B cell (primary cell): ENCODE measurements at regions of chr19 and their contacts with region 1.

Region 1: DNA sequence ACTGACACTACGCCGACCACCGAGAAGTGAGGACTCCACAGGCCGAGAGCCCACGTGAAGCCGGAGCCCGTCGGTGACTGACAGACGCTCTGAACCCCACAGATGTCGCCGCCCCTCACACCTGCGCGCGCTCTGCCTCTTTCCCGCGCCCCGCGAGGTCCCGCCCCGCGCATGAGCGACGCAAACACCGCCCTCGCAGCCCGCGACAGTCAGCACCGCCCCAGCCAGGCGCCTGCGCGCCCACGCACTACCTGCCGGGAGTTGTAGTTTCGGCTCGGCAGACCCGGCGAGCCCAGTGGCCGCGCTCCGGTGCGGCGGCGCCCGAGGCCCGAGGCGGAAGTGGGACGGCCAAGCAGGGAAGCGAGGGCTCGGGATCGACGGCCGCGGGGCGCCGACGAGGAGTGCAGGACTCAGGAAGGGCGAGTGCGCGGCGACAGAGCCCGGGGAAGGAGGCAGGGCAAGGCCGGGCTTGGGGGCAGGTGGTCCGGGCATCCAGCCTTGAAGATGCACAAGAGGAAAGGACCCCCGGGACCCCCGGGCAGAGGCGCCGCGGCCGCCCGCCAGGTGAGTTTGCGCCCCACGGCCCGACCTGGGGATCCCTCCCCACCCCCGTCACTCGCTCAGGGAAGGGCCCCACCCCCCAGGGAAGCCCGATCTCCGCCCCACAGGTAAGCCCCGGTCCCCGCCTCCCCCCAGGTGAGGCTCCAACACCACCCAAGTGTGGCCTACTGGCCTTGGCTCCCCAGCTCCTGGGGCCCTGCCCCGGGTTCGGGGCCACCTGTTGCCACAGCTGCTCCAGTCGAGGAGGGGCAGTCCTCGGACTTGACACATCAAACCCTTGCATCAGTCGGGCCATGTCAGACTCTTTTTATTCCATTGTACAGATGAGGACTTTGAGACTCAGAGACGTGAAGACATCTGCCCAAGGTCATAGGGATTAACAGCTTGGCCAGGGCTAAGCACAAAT is at the starts of genes BRME1 and CC2D1A:
- DNase-seq: peak; percentile 95
- ATAC-seq: peak; percentile 98
- H3K4me3 ChIP-seq: peak within 1 kb of the TSS; percentile 38 to 90 (median 82)
- H3K4me3 Mint-ChIP-seq: peak within 1 kb of the TSS; percentile 89
- H3K27ac ChIP-seq: peak within 1 kb of the TSS; percentile 52 to 62
- H3K27ac Mint-ChIP-seq: peak within 1 kb of the TSS; percentile 80
- H3K4me1 ChIP-seq: peaks cover 9 to 13% of the 10 kb centered on the region in 2 donors
- H3K4me1 Mint-ChIP-seq: peaks cover 13% of the 10 kb centered on the region
- H3K27me3 ChIP-seq: no peaks in the 10 kb centered on the region
- H3K27me3 Mint-ChIP-seq: no peaks in the 10 kb centered on the region
- CTCF ChIP-seq: no peak
- total RNA-seq, gene BRME1: 1.7 and 2.4 TPM in 2 replicates
- total RNA-seq, gene CC2D1A: 47.1 and 47.2 TPM in 2 replicates

Region 2: GRCh38 chr19:13952154-13953035 is 46.2 kb after region 1 on chr19 and contains the start of gene DCAF15:
- CTCF ChIA-PET with region 1: no interaction called
- POLR2A ChIA-PET with region 1: interaction called, 3 read pairs
- intact Hi-C with region 1: loop called (anchors 1 kb)
- DNase-seq: peak; percentile 100
- ATAC-seq: peak; percentile 95
- H3K4me3 ChIP-seq: peak within 1 kb of the TSS; percentile 55 to 98 (median 76)
- H3K4me3 Mint-ChIP-seq: peak within 1 kb of the TSS; percentile 96
- H3K27ac ChIP-seq: peak within 1 kb of the TSS; percentile 34 to 85
- H3K27ac Mint-ChIP-seq: peak within 1 kb of the TSS; percentile 96
- H3K4me1 ChIP-seq: peaks cover 15 to 18% of the 10 kb centered on the region in 2 donors
- H3K4me1 Mint-ChIP-seq: peaks cover 21% of the 10 kb centered on the region
- H3K27me3 ChIP-seq: no peaks in the 10 kb centered on the region
- H3K27me3 Mint-ChIP-seq: no peaks in the 10 kb centered on the region
- CTCF ChIP-seq: no peak
- total RNA-seq, gene DCAF15: 115 and 116 TPM in 2 replicates

Region 3: DNA sequence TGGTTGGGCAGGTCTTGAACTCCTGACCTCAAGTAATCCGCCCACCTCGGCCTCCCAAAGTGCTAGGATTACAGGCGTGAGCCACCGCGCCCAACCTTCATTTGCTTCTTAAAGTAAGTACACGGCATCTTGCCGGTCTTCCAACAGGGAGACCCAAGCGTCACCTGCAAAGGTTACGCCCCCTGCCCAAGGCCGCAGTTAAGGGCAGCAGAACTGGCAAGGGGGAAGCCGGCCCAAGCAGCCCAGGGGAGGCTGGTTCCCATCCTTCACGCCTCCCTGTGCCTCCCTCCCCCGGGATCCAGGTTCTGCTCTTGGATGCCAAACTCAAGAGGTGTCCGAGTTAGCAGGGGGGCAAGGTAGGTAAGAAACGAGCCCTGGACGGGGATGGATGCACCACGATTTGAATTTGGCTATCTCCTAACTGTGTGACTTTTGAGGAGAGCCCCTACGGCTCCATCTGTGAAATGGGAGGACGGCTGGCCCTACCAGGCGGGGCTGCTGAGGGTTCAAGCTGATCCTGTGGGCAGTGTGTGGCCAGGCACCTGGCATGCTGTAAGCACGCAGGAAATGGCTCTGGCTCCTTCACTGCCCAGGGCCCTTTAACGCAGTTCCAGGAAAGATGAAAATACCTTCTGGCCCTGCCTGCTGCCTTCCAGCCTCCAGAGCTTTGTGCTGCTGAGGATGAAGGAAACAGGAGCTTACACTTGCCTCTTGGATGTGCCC is 90.9 kb after region 1 on chr19:
- CTCF ChIA-PET with region 1: no interaction called
- POLR2A ChIA-PET with region 1: interaction called, 12 read pairs
- intact Hi-C with region 1: no loop called
- DNase-seq: no peak
- ATAC-seq: no peak
- H3K4me3 ChIP-seq: no peak overlapping the region
- H3K4me3 Mint-ChIP-seq: no peak overlapping the region
- H3K27ac ChIP-seq: no peak overlapping the region
- H3K27ac Mint-ChIP-seq: no peak overlapping the region
- H3K4me1 ChIP-seq: peaks cover 20 to 22% of the 10 kb centered on the region in 2 donors
- H3K4me1 Mint-ChIP-seq: peaks cover 24% of the 10 kb centered on the region
- H3K27me3 ChIP-seq: no peaks in the 10 kb centered on the region
- H3K27me3 Mint-ChIP-seq: no peaks in the 10 kb centered on the region
- CTCF ChIP-seq: no peak

Region 4: GRCh38 chr19:14048443-14049153 is 142.4 kb after region 1 on chr19:
- CTCF ChIA-PET with region 1: interaction called, 19 read pairs
- POLR2A ChIA-PET with region 1: no interaction called
- intact Hi-C with region 1: loop called (anchors 1 kb)
- DNase-seq: peak; percentile 80
- ATAC-seq: peak; percentile 92
- H3K4me3 ChIP-seq: no peak overlapping the region
- H3K4me3 Mint-ChIP-seq: no peak overlapping the region
- H3K27ac ChIP-seq: no peak overlapping the region
- H3K27ac Mint-ChIP-seq: no peak overlapping the region
- H3K4me1 ChIP-seq: no peaks in the 10 kb centered on the region
- H3K4me1 Mint-ChIP-seq: no peaks in the 10 kb centered on the region
- H3K27me3 ChIP-seq: no peaks in the 10 kb centered on the region
- H3K27me3 Mint-ChIP-seq: no peaks in the 10 kb centered on the region
- CTCF ChIP-seq: peak; percentile 95

Region 5: GRCh38 chr19:14081325-14082093 is 175.3 kb after region 1 on chr19:
- CTCF ChIA-PET with region 1: interaction called, 3 read pairs
- POLR2A ChIA-PET with region 1: no interaction called
- intact Hi-C with region 1: loop called (anchors 1 kb)
- DNase-seq: peak; percentile 99
- ATAC-seq: peak; percentile 91
- H3K4me3 ChIP-seq: peak overlapping the region; percentile 65 to 89 (median 77)
- H3K4me3 Mint-ChIP-seq: peak overlapping the region; percentile 96
- H3K27ac ChIP-seq: peak overlapping the region; percentile 72 to 89
- H3K27ac Mint-ChIP-seq: peak overlapping the region; percentile 96
- H3K4me1 ChIP-seq: peaks cover 14 to 18% of the 10 kb centered on the region in 2 donors
- H3K4me1 Mint-ChIP-seq: peaks cover 12% of the 10 kb centered on the region
- H3K27me3 ChIP-seq: no peaks in the 10 kb centered on the region
- H3K27me3 Mint-ChIP-seq: no peaks in the 10 kb centered on the region
- CTCF ChIP-seq: peak; percentile 10